ENCODE measurements at regions of chr2 and their contacts with region 1.

Region 1: GRCh38 chr2:227766373-227766883 is 20.7 kb downstream of the SCYGR8 start:
- DNase-seq: peak; percentile 36 to 61 (median 60)
- H3K4me3 ChIP-seq: no peak overlapping the region
- H3K4me3 Mint-ChIP-seq: no peak overlapping the region
- H3K27ac ChIP-seq: no peak overlapping the region
- H3K27ac Mint-ChIP-seq: no peak overlapping the region
- H3K4me1 ChIP-seq: no peaks in the 10 kb centered on the region
- H3K4me1 Mint-ChIP-seq: peaks cover 4% of the 10 kb centered on the region
- H3K27me3 ChIP-seq: no peaks in the 10 kb centered on the region
- H3K27me3 Mint-ChIP-seq: peaks cover 3 to 6% (median 4%) of the 10 kb centered on the region in 3 donors
- CTCF ChIP-seq: peak; percentile 86

Region 2: DNA sequence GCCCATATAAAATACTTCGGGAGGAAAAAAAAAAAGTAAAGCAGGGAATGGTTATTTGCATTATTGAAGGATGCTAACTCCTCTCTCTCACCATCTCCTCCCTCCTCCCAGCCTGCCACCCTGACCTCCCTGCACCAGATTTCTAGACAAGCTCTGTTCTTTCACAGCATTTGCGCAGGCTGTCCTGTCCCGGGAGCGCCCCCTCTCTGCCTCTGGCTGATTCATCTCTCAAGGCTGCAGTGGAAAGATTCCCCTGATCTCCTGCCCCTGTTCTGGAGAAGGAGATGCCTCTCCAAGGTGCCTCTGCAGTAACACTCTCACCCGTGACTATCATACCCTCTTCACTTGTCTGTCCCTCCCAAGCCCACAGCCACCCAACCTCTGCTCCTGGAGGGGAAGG is 640.9 kb before region 1 on chr2:
- intact Hi-C with region 1: loop called in 1 of 2 experiments (anchors 10 kb)
- DNase-seq: no peak
- H3K4me3 ChIP-seq: no peak overlapping the region
- H3K4me3 Mint-ChIP-seq: peak overlapping the region in 1 of 2 donors; percentile 16
- H3K27ac ChIP-seq: no peak overlapping the region
- H3K27ac Mint-ChIP-seq: no peak overlapping the region
- H3K4me1 ChIP-seq: no peaks in the 10 kb centered on the region
- H3K4me1 Mint-ChIP-seq: no peaks in the 10 kb centered on the region
- H3K27me3 ChIP-seq: no peaks in the 10 kb centered on the region
- H3K27me3 Mint-ChIP-seq: peaks cover 5 to 7% (median 7%) of the 10 kb centered on the region in 3 donors
- CTCF ChIP-seq: no peak

Region 3: GRCh38 chr2:227238238-227239237 is 527.9 kb before region 1 on chr2:
- intact Hi-C with region 1: loop called in 1 of 2 experiments (anchors 5 kb)
- DNase-seq: peak; percentile 25 to 44 (median 41)
- H3K4me3 ChIP-seq: no peak overlapping the region
- H3K4me3 Mint-ChIP-seq: peak overlapping the region in 1 of 2 donors; percentile 39
- H3K27ac ChIP-seq: no peak overlapping the region
- H3K27ac Mint-ChIP-seq: no peak overlapping the region
- H3K4me1 ChIP-seq: no peaks in the 10 kb centered on the region
- H3K4me1 Mint-ChIP-seq: no peaks in the 10 kb centered on the region
- H3K27me3 ChIP-seq: no peaks in the 10 kb centered on the region
- H3K27me3 Mint-ChIP-seq: peaks cover 4 to 9% (median 5%) of the 10 kb centered on the region in 3 donors
- CTCF ChIP-seq: peak; percentile 95

Measured in CD14-positive monocyte (primary cell).